B cell (primary cell): ENCODE measurements at regions of chr10 and their contacts with region 1.

Region 1: GRCh38 chr10:27360581-27361172 is 120.1 kb upstream of the ACBD5 start:
- DNase-seq: peak; percentile 86
- ATAC-seq: peak; percentile 92
- H3K4me3 ChIP-seq: no peak overlapping the region
- H3K4me3 Mint-ChIP-seq: no peak overlapping the region
- H3K27ac ChIP-seq: no peak overlapping the region
- H3K27ac Mint-ChIP-seq: no peak overlapping the region
- H3K4me1 ChIP-seq: peaks cover 7 to 9% of the 10 kb centered on the region in 2 donors
- H3K4me1 Mint-ChIP-seq: peaks cover 10% of the 10 kb centered on the region
- H3K27me3 ChIP-seq: no peaks in the 10 kb centered on the region
- H3K27me3 Mint-ChIP-seq: no peaks in the 10 kb centered on the region
- CTCF ChIP-seq: peak; percentile 99

Region 2: DNA sequence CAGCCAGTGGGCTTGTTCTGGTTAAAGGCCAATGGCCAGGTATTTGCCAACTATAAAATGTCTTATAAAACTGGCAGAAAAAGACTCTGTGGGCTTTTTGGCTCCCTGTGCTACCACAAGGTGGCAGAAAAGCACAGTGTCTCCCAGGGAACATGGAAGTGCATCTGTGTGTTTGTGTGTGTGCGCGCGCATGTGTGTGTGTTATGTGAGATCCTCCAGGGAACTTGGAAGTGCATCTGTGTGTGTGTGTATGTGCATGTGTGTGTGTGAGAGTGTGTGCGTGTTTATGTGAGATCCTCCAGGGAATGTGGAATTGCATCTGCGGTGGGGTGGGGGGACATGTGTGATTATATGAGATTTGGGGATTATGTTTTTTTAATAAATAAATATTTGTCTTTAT is 469.7 kb before region 1 on chr10:
- CTCF ChIA-PET with region 1: no interaction called
- POLR2A ChIA-PET with region 1: no interaction called
- intact Hi-C with region 1: loop called (anchors 5 kb)
- DNase-seq: peak; percentile 42
- ATAC-seq: no peak
- H3K4me3 ChIP-seq: no peak overlapping the region
- H3K4me3 Mint-ChIP-seq: peak overlapping the region; percentile 7
- H3K27ac ChIP-seq: no peak overlapping the region
- H3K27ac Mint-ChIP-seq: no peak overlapping the region
- H3K4me1 ChIP-seq: peaks cover 0 to 10% of the 10 kb centered on the region in 2 donors
- H3K4me1 Mint-ChIP-seq: peaks cover 9% of the 10 kb centered on the region
- H3K27me3 ChIP-seq: no peaks in the 10 kb centered on the region
- H3K27me3 Mint-ChIP-seq: peaks cover 7% of the 10 kb centered on the region
- CTCF ChIP-seq: peak; percentile 37

Region 3: GRCh38 chr10:26939290-26939961 is 421.3 kb before region 1 on chr10:
- CTCF ChIA-PET with region 1: interaction called, 3 read pairs
- POLR2A ChIA-PET with region 1: no interaction called
- intact Hi-C with region 1: loop called (anchors 5 kb)
- DNase-seq: no peak
- ATAC-seq: no peak
- H3K4me3 ChIP-seq: no peak overlapping the region
- H3K4me3 Mint-ChIP-seq: no peak overlapping the region
- H3K27ac ChIP-seq: no peak overlapping the region
- H3K27ac Mint-ChIP-seq: no peak overlapping the region
- H3K4me1 ChIP-seq: no peaks in the 10 kb centered on the region
- H3K4me1 Mint-ChIP-seq: no peaks in the 10 kb centered on the region
- H3K27me3 ChIP-seq: no peaks in the 10 kb centered on the region
- H3K27me3 Mint-ChIP-seq: no peaks in the 10 kb centered on the region
- CTCF ChIP-seq: no peak

Region 4: DNA sequence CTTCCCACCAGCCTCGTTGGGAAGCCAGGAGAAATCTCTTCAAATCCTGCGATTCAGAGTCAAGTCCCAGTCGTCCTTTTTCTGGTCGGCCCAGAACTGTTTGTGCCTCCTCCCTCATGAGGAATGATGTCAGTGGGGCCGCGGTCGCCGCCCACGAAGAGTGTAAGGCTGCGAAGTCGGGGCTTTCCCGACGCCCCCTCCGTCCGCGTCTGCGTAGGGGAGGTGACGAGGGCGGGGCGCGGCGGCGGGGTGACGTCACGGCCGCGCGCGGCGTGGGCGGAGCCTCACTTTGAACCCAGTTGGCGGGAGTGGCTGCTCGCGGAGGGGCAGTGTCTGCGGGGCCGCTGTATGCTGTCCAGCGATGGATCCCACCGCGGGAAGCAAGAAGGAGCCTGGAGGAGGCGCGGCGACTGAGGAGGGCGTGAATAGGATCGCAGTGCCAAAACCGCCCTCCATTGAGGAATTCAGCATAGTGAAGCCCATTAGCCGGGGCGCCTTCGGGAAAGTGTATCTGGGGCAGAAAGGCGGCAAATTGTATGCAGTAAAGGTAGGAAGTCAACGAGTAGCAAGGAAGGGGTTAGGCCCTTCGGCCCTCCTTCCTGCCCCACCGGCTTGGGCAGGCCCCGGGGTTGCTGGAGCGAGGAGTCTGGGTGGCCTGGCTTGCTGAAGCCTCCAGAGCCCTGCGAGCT is 205.5 kb before region 1 on chr10 and contains the start of gene MASTL:
- CTCF ChIA-PET with region 1: no interaction called
- POLR2A ChIA-PET with region 1: no interaction called
- intact Hi-C with region 1: loop called (anchors 1 kb)
- DNase-seq: peak; percentile 98
- ATAC-seq: peak; percentile 86
- H3K4me3 ChIP-seq: peak within 1 kb of the TSS; percentile 73 to 99 (median 95)
- H3K4me3 Mint-ChIP-seq: peak within 1 kb of the TSS; percentile 96
- H3K27ac ChIP-seq: peak within 1 kb of the TSS; percentile 97
- H3K27ac Mint-ChIP-seq: peak within 1 kb of the TSS; percentile 100
- H3K4me1 ChIP-seq: peaks cover 20 to 29% of the 10 kb centered on the region in 2 donors
- H3K4me1 Mint-ChIP-seq: peaks cover 48% of the 10 kb centered on the region
- H3K27me3 ChIP-seq: no peaks in the 10 kb centered on the region
- H3K27me3 Mint-ChIP-seq: no peaks in the 10 kb centered on the region
- CTCF ChIP-seq: no peak
- total RNA-seq, gene MASTL: 12.4 and 13.6 TPM in 2 replicates

Region 5: GRCh38 chr10:27504007-27504807 is 143.5 kb after region 1 on chr10 and contains the start of gene RAB18:
- CTCF ChIA-PET with region 1: no interaction called
- POLR2A ChIA-PET with region 1: no interaction called
- intact Hi-C with region 1: loop called (anchors 10 kb)
- DNase-seq: peak; percentile 98
- ATAC-seq: peak; percentile 95
- H3K4me3 ChIP-seq: peak within 1 kb of the TSS; percentile 68 to 91 (median 86)
- H3K4me3 Mint-ChIP-seq: peak within 1 kb of the TSS; percentile 100
- H3K27ac ChIP-seq: peak within 1 kb of the TSS; percentile 87 to 88
- H3K27ac Mint-ChIP-seq: peak within 1 kb of the TSS; percentile 100
- H3K4me1 ChIP-seq: peaks cover 13 to 18% of the 10 kb centered on the region in 2 donors
- H3K4me1 Mint-ChIP-seq: peaks cover 41% of the 10 kb centered on the region
- H3K27me3 ChIP-seq: peaks cover 0 to 15% (median 2%) of the 10 kb centered on the region in 4 experiments
- H3K27me3 Mint-ChIP-seq: peaks cover 4% of the 10 kb centered on the region
- CTCF ChIP-seq: no peak
- total RNA-seq, gene RAB18: 56.5 and 60.5 TPM in 2 replicates